ENCODE measurements at regions of chr2 and their contacts with region 1.

Region 1: DNA sequence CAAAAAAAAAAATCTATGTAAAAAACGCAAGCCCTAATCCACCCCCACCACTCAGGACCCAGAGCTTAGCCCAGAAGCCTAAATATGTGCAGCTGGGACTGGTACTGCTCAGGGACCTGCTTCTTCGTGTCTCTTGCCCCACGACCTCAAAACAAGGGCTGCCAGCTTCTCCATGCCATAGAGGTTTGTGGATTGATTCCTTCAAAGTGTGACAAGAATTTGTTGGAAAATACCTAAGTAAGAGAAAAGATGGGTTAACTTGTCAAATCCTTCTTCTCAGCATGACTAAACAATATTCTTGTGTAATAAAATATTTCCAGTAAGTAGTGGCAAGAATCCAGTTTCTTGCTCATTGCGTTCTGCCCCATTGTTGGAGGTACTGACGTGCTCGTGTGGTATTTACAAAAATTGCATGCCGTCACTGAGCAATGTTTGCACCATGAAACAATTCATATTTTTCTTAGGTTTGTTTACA is 825 bp upstream of the SCYGR1 start:
- DNase-seq: no peak
- ATAC-seq: no peak
- H3K4me3 Mint-ChIP-seq: no peak overlapping the region
- H3K27ac Mint-ChIP-seq: no peak overlapping the region
- H3K4me1 Mint-ChIP-seq: peaks cover 45% of the 10 kb centered on the region
- H3K27me3 Mint-ChIP-seq: no peaks in the 10 kb centered on the region
- CTCF ChIP-seq: no peak

Region 2: DNA sequence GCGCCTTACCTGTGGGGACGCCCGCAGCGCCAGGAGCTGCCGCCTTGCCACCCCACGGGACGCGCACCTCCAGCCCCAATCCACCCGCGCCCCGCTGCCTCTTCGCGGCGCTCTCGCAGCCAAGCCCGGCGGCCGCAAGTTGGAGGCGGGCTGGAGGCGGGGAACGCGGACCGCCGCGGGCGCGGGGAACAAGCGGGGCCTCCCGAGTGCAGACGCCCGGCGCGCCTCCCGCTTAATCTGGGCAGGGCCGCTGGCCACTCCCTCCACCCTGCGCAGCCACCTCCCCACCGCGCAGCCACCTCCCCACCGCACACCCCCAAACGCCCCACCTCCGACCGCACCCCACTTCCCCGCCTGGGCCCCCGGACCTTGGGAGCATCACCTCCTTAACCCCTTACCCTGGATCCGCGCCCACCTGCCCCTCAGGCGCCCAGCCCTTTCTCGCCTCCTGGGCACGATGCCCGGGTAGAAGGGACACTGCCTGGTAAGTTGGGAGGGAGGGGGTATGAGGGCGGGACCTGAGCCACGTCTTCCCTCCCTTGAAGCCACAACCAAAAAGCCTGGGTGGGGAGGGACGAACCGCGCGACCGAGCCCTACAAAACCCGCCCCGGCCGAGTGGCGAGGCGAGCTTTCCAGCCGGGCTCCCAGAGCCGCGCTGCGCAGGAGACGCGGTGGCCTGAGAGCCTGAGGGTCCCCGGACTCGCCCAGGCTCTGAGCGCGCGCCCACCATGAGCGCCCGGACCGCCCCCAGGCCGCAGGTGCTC is 224.4 kb before region 1 on chr2 and contains the starts of genes COL4A3 and COL4A4:
- CTCF ChIA-PET with region 1: no interaction called
- POLR2A ChIA-PET with region 1: interaction called, 10 read pairs
- intact Hi-C with region 1: no loop called
- DNase-seq: peak; percentile 54
- ATAC-seq: peak; percentile 78
- H3K4me3 Mint-ChIP-seq: peak within 1 kb of the TSS; percentile 87
- H3K27ac Mint-ChIP-seq: peak within 1 kb of the TSS; percentile 89
- H3K4me1 Mint-ChIP-seq: peaks cover 44% of the 10 kb centered on the region
- H3K27me3 Mint-ChIP-seq: peaks cover 5% of the 10 kb centered on the region
- CTCF ChIP-seq: no peak
- total RNA-seq, gene COL4A3: 15.5 and 18.3 TPM in 2 replicates
- total RNA-seq, gene COL4A4: 9.3 and 10.9 TPM in 2 replicates

Region 3: DNA sequence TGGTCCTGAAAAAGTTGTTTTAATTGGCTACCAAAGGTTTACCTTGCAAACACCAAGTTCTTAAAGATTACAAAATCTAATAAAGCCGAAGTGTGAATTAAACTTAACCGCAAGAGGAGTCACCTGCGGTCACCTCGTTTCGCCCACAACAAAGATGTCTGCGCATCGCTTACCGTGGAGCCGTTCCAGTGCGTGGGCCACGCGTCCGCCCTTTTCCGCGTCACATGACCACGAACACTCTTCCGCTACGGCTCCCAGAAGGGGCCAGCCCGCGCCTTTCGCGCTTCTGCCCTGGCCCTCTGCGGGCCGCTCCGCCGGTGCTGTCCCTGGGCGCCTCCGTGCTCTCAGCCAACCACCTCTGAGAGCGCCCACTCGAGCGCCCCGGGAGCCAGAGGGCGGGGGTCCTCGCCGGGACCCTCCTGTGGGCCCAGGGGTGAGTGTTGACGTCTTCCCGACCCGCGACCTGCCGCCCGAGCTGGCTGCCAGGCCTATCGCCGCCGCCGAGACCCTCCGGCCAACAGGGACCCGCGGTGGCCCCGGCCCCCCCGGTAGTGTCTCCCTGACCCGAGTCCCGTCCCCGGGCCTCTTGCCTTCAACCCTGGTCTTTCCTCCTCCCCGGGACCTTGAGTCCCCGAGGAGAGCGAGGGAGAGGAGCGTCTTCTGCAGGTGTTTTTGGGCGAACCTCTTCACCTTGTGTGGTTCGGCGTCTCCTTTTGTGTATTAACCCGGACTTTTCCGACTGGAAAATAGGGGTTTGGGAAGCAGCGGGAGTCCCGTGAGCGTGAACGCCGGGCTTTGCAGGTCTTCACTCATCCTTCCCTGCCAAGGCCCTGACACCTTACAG is 63.4 kb before region 1 on chr2 and contains the start of gene MFF:
- CTCF ChIA-PET with region 1: no interaction called
- POLR2A ChIA-PET with region 1: interaction called, 4 read pairs
- intact Hi-C with region 1: loop called (anchors 1 kb)
- DNase-seq: peak; percentile 87
- ATAC-seq: peak; percentile 98
- H3K4me3 Mint-ChIP-seq: peak within 1 kb of the TSS; percentile 95
- H3K27ac Mint-ChIP-seq: peak within 1 kb of the TSS; percentile 91
- H3K4me1 Mint-ChIP-seq: peaks cover 33% of the 10 kb centered on the region
- H3K27me3 Mint-ChIP-seq: no peaks in the 10 kb centered on the region
- CTCF ChIP-seq: no peak
- total RNA-seq, gene MFF: 66.4 and 78.9 TPM in 2 replicates

Region 4: GRCh38 chr2:227415538-227416424 is 27.2 kb after region 1 on chr2:
- CTCF ChIA-PET with region 1: no interaction called
- POLR2A ChIA-PET with region 1: interaction called, 21 read pairs
- intact Hi-C with region 1: no loop called
- DNase-seq: no peak
- ATAC-seq: peak; percentile 41
- H3K4me3 Mint-ChIP-seq: no peak overlapping the region
- H3K27ac Mint-ChIP-seq: peak overlapping the region; percentile 69
- H3K4me1 Mint-ChIP-seq: peaks cover 47% of the 10 kb centered on the region
- H3K27me3 Mint-ChIP-seq: no peaks in the 10 kb centered on the region
- CTCF ChIP-seq: no peak

Region 5: GRCh38 chr2:227471924-227472264 is 83.3 kb after region 1 on chr2 and contains the start of gene AGFG1:
- CTCF ChIA-PET with region 1: interaction called, 3 read pairs
- POLR2A ChIA-PET with region 1: interaction called, 4 read pairs
- intact Hi-C with region 1: loop called (anchors 1 kb)
- DNase-seq: peak; percentile 89
- ATAC-seq: peak; percentile 87
- H3K4me3 Mint-ChIP-seq: peak within 1 kb of the TSS; percentile 90
- H3K27ac Mint-ChIP-seq: peak within 1 kb of the TSS; percentile 78
- H3K4me1 Mint-ChIP-seq: peaks cover 36% of the 10 kb centered on the region
- H3K27me3 Mint-ChIP-seq: no peaks in the 10 kb centered on the region
- CTCF ChIP-seq: peak; percentile 77
- total RNA-seq, gene AGFG1: 108 and 125 TPM in 2 replicates